ENCODE measurements at regions of chr19 and their contacts with region 1.

Region 1: GRCh38 chr19:32543107-32543900 is 37.7 kb upstream of the PDCD5 start:
- DNase-seq: no peak
- ATAC-seq: no peak
- H3K4me3 Mint-ChIP-seq: no peak overlapping the region
- H3K27ac Mint-ChIP-seq: no peak overlapping the region
- H3K4me1 Mint-ChIP-seq: no peaks in the 10 kb centered on the region
- H3K27me3 Mint-ChIP-seq: no peaks in the 10 kb centered on the region
- CTCF ChIP-seq: no peak

Region 2: DNA sequence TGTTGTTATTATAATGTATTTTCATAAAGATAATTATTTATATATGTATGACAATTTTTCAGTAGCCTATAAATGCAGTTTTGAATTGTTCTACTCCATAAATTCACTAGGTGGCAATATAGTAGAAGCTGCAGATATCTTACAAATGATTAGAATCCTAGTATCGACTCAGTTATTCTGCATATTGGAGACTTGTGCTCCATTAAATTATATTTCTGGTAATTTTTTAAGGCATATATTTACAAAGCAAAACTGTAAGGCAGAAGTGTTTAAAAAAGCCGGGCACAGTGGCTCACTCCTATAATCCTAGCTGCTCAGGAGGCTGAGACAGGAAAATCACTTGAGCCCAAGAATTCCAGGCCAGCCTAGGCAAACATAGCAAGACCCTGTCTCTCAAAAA is 79.0 kb before region 1 on chr19:
- CTCF ChIA-PET with region 1: no interaction called
- POLR2A ChIA-PET with region 1: no interaction called
- intact Hi-C with region 1: loop called (anchors 10 kb)
- DNase-seq: no peak
- ATAC-seq: no peak
- H3K4me3 Mint-ChIP-seq: no peak overlapping the region
- H3K27ac Mint-ChIP-seq: no peak overlapping the region
- H3K4me1 Mint-ChIP-seq: no peaks in the 10 kb centered on the region
- H3K27me3 Mint-ChIP-seq: no peaks in the 10 kb centered on the region
- CTCF ChIP-seq: peak; percentile 48